Vagina (tissue), 2 donors: ENCODE measurements at regions of chr21 and their contacts with region 1.

Region 1: DNA sequence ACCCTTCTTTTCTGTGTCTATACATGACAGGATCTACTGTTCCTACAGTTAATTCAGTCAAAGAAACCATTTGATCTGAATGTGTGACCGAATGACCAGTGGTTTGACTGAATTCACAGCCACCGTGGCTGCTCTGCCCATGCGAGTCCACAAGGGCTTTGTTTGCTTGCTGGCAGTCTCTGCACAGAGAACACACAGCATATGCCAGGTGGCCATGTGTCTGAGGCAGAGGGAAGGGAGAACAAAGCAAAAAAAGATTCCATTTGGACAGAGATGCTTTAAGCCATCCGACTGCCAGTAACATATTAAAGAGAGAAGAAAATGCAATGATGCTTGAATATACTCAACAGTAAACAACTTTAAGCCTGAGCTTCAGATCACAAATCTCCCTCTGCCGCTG is 737.8 kb upstream of the CXADR start:
- DNase-seq: no peak
- H3K4me3 ChIP-seq: no peak overlapping the region
- H3K27ac ChIP-seq: no peak overlapping the region
- H3K4me1 ChIP-seq: no peaks in the 10 kb centered on the region
- H3K27me3 ChIP-seq: no peaks in the 10 kb centered on the region
- CTCF ChIP-seq: no peak
- POLR2A ChIP-seq: no peak

Region 2: GRCh38 chr21:14942801-14943490 is 1832.1 kb before region 1 on chr21:
- intact Hi-C with region 1: loop called (anchors 5 kb)
- DNase-seq: no peak
- H3K4me3 ChIP-seq: no peak overlapping the region
- H3K27ac ChIP-seq: no peak overlapping the region
- H3K4me1 ChIP-seq: no peaks in the 10 kb centered on the region
- H3K27me3 ChIP-seq: no peaks in the 10 kb centered on the region
- CTCF ChIP-seq: no peak
- POLR2A ChIP-seq: no peak

Region 3: DNA sequence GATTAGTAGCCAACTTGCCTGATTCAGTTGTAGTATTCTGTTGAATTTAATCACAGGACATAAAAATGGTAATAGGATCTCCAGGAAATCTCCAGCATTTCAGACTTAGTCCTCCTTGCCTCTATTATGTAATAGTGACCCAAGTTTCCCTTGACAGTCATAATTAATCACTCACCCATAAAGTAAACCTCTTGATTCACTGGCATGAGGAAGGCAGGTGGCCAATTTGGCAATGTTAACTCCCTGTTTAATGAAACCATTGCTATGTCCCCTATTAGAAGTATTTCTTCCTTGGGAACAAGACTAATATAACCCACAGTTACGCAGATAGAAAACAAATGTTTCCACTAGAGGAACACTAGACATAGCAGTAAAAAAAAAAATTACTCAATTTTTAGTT is 133.0 kb after region 1 on chr21:
- intact Hi-C with region 1: no loop called
- DNase-seq: no peak
- H3K4me3 ChIP-seq: no peak overlapping the region
- H3K27ac ChIP-seq: no peak overlapping the region
- H3K4me1 ChIP-seq: peaks cover 15% of the 10 kb centered on the region
- H3K27me3 ChIP-seq: no peaks in the 10 kb centered on the region
- CTCF ChIP-seq: no peak
- POLR2A ChIP-seq: no peak